Activated CD8-positive, alpha-beta memory T cell treated with anti-CD3 and anti-CD28 coated beads, Interleukin-2, amount 10 ng/mL, durations not matched to agents 7 days and 5 days (primary cell): ENCODE measurements at regions of chr11 and their contacts with region 1.

Region 1: GRCh38 chr11:57335343-57336110 is at the start of gene SSRP1:
- DNase-seq: peak; percentile 93
- ATAC-seq: peak; percentile 98
- H3K4me3 Mint-ChIP-seq: peak within 1 kb of the TSS; percentile 94
- H3K27ac Mint-ChIP-seq: peak within 1 kb of the TSS; percentile 92
- H3K4me1 Mint-ChIP-seq: peaks cover 41% of the 10 kb centered on the region
- H3K27me3 Mint-ChIP-seq: peaks cover 5% of the 10 kb centered on the region
- total RNA-seq, gene SSRP1: 158 to 196 TPM

Region 2: DNA sequence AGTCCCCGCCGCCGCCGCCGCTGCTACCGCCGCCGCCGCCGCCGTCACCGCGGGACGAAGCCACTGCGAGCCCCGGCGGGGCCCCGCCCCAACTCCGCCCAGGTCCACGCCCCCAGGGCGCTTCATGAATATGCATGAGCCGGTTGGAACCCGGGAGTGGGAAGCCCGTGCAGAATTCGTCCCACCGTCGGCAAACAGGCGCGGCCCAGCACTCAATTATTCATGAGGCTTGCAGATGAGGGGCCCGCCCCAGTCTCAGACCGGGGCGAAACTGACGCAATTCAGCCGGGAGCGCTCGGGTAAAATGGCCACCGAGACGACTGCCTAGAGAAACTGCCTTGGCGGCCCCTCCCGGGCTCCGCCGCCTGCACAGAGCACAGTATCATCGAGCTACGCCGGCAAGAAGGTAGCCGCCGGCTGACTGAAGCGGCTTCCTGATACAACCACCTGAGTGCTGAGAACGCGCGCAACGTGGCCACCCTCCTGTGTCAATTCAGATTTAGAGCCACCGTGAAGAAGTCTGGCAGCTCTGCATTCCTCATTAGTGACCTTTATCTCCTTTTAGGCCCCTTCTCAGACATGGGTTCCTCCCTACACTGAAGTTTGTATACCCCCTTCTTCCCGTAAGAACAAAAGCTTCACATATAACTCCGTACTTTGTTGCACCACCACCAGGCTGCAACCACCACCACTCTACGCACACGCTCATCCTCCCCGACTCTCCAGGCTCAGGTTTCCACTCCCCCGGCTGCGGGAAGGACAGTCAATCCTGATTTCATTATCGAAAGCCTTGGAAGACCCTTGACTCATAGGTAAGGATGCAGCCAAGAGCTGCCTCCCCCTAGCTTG is 10.4 kb before region 1 on chr11 and contains the start of gene TNKS1BP1:
- CTCF ChIA-PET with region 1: interaction called, 22 read pairs
- DNase-seq: peak; percentile 92
- ATAC-seq: peak; percentile 91
- H3K4me3 Mint-ChIP-seq: peak within 1 kb of the TSS; percentile 87
- H3K27ac Mint-ChIP-seq: peak within 1 kb of the TSS; percentile 96
- H3K4me1 Mint-ChIP-seq: peaks cover 29% of the 10 kb centered on the region
- H3K27me3 Mint-ChIP-seq: no peaks in the 10 kb centered on the region
- total RNA-seq, gene TNKS1BP1: 4.4 to 5.8 TPM